CD8-positive, alpha-beta T cell (primary cell): ENCODE measurements at regions of chr1 and their contacts with region 1.

Region 1: GRCh38 chr1:243748706-243749283 is 101.2 kb downstream of the AKT3 start:
- DNase-seq: peak in 3 of 9 experiments; percentile 29 to 79 (median 72)
- ATAC-seq: peak; percentile 99
- H3K4me3 ChIP-seq: no peak overlapping the region
- H3K4me3 Mint-ChIP-seq: no peak overlapping the region
- H3K27ac ChIP-seq: no peak overlapping the region
- H3K27ac Mint-ChIP-seq: no peak overlapping the region
- H3K4me1 ChIP-seq: peaks cover 8% of the 10 kb centered on the region
- H3K4me1 Mint-ChIP-seq: peaks cover 32% of the 10 kb centered on the region
- H3K27me3 ChIP-seq: no peaks in the 10 kb centered on the region
- H3K27me3 Mint-ChIP-seq: no peaks in the 10 kb centered on the region
- CTCF ChIP-seq: peak; percentile 93

Region 2: DNA sequence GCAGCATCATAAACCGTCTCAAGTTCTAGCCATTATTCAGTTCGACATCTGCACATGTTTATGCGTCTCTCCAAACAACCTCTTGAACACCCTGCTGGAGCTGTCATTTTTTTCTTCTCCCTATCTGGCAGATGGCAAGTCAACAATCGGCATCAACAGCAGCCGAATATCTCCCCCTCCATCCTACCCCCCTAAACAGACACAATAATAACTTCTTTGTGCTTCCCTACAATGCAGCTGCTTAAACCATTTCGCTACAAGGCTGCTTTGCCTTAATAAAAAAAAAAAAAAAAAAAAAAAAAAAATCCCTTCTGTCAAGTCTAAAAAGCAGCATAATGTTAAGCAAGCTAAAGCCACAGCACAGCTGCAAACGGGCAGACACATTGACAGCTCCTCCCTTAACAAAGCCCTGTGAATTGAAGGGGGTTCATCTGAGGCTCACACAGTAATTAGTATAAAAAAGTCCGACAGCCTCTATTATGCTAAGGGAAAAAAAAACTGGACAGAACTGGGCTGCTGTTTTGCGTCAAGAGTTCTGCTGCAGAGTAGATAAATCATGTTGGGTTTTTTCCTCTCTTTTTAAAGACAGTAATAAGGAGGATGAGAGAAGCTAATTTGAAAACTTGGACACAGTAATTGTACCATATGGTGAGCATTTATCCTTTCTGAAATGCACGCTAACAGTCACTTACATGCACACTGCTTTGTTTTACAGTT is 35.2 kb before region 1 on chr1:
- CTCF ChIA-PET with region 1: no interaction called
- POLR2A ChIA-PET with region 1: no interaction called
- intact Hi-C with region 1: loop called in 1 of 2 experiments (anchors 5 kb)
- DNase-seq: peak in 4 of 9 experiments; percentile 11 to 47 (median 30)
- ATAC-seq: no peak
- H3K4me3 ChIP-seq: no peak overlapping the region
- H3K4me3 Mint-ChIP-seq: no peak overlapping the region
- H3K27ac ChIP-seq: no peak overlapping the region
- H3K27ac Mint-ChIP-seq: no peak overlapping the region
- H3K4me1 ChIP-seq: no peaks in the 10 kb centered on the region
- H3K4me1 Mint-ChIP-seq: peaks cover 58% of the 10 kb centered on the region
- H3K27me3 ChIP-seq: no peaks in the 10 kb centered on the region
- H3K27me3 Mint-ChIP-seq: no peaks in the 10 kb centered on the region
- CTCF ChIP-seq: no peak

Region 3: DNA sequence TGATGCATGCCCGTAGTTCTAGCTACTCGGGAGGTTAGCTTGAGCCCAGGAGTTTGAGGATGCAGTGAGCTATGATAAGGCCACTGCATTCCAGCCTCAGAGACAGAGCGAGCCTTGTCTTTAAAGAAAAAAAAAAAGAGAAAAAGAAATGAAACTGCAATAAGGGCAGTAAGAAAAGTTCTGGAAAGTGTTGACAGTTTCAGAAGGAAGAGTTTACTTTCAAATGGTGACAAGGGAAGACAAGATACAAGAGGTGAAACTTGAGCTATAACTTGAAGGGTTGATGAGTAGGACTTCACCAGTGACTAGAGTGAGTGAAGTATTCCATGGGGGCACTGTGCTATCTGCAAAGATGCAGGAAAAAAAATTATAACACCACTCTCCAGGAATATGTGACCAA is 23.7 kb before region 1 on chr1:
- CTCF ChIA-PET with region 1: no interaction called
- POLR2A ChIA-PET with region 1: no interaction called
- intact Hi-C with region 1: no loop called
- DNase-seq: no peak
- ATAC-seq: no peak
- H3K4me3 ChIP-seq: no peak overlapping the region
- H3K4me3 Mint-ChIP-seq: no peak overlapping the region
- H3K27ac ChIP-seq: no peak overlapping the region
- H3K27ac Mint-ChIP-seq: peak overlapping the region; percentile 43
- H3K4me1 ChIP-seq: no peaks in the 10 kb centered on the region
- H3K4me1 Mint-ChIP-seq: peaks cover 43% of the 10 kb centered on the region
- H3K27me3 ChIP-seq: no peaks in the 10 kb centered on the region
- H3K27me3 Mint-ChIP-seq: no peaks in the 10 kb centered on the region
- CTCF ChIP-seq: no peak

Region 4: GRCh38 chr1:243763806-243764205 is 15.0 kb after region 1 on chr1:
- CTCF ChIA-PET with region 1: interaction called, 3 read pairs
- POLR2A ChIA-PET with region 1: no interaction called
- intact Hi-C with region 1: loop called in 1 of 2 experiments (anchors 2 kb)
- DNase-seq: no peak
- ATAC-seq: no peak
- H3K4me3 ChIP-seq: no peak overlapping the region
- H3K4me3 Mint-ChIP-seq: no peak overlapping the region
- H3K27ac ChIP-seq: no peak overlapping the region
- H3K27ac Mint-ChIP-seq: no peak overlapping the region
- H3K4me1 ChIP-seq: peaks cover 4% of the 10 kb centered on the region
- H3K4me1 Mint-ChIP-seq: peaks cover 45% of the 10 kb centered on the region
- H3K27me3 ChIP-seq: no peaks in the 10 kb centered on the region
- H3K27me3 Mint-ChIP-seq: no peaks in the 10 kb centered on the region
- CTCF ChIP-seq: no peak

Region 5: GRCh38 chr1:243791586-243792267 is 42.9 kb after region 1 on chr1:
- CTCF ChIA-PET with region 1: interaction called, 3 read pairs
- POLR2A ChIA-PET with region 1: no interaction called
- intact Hi-C with region 1: loop called in 1 of 2 experiments (anchors 1 kb)
- DNase-seq: no peak
- ATAC-seq: no peak
- H3K4me3 ChIP-seq: no peak overlapping the region
- H3K4me3 Mint-ChIP-seq: no peak overlapping the region
- H3K27ac ChIP-seq: no peak overlapping the region
- H3K27ac Mint-ChIP-seq: no peak overlapping the region
- H3K4me1 ChIP-seq: peaks cover 6% of the 10 kb centered on the region
- H3K4me1 Mint-ChIP-seq: peaks cover 61% of the 10 kb centered on the region
- H3K27me3 ChIP-seq: no peaks in the 10 kb centered on the region
- H3K27me3 Mint-ChIP-seq: no peaks in the 10 kb centered on the region
- CTCF ChIP-seq: no peak